Activated naive CD4-positive, alpha-beta T cell treated with anti-CD3 and anti-CD28 coated beads, Interleukin-2, amount 10 ng/mL, durations not matched to agents 7 days and 5 days (primary cell): ENCODE measurements at regions of chr6 and their contacts with region 1.

Region 1: DNA sequence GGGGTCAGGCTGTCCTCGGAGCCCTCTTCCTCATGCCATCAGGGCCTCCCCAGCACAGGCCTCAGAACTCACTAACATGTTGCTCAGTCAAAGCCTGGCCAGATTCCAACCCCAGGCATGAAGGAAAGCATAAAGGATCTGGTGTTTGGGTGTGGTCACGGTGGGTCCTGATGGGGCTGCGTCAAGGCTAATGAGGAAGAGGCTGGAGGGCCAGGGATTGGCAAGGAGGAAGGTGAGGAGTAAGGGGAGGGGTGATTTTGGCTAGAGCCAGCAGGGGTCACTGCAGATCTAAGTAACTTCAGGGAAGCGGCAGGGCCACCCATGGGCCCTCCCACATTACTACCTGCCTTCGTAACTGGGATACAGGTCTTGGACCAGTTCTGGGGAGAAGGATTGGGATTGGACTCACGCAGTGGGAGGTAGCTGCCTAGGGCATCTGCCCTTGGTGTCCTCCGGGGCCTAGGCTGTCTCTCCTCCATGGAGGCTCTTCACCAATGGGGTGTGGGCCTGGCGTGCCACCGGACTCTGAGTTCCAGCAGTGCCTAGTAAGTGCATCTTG is 36.2 kb upstream of the MRPS18A start:
- DNase-seq: peak; percentile 84
- H3K4me3 Mint-ChIP-seq: no peak overlapping the region
- H3K27ac Mint-ChIP-seq: no peak overlapping the region
- H3K4me1 Mint-ChIP-seq: peaks cover 30% of the 10 kb centered on the region
- H3K27me3 Mint-ChIP-seq: peaks cover 26% of the 10 kb centered on the region

Region 2: DNA sequence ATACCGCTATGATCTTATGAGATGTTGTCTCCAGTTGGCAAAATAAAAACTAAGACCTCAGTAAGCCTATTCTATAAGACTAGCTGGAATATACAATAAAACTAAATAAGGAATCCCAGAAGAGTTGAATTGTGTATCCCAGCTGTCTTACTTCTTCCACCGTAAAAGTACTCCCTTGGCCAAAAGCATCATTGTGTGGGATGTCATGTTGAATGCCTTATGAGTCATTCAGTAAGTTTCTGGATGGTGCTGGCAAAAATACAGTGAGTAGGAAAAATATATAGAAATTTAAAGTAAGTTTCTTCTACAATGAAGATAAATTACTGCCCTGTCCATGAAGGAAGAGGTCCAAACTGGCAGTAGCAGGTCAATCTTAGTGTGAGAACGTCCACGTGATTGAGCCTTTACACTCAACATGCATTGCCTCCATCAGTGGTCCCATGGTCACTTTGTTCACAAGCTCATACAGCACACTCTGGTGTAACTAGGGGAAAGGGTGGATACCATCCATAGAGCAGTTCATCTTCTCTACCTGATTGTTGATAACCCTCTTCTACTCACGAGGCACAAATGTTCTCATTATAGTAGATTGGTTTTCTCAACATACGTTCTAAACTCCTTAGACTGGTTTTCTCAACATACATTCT is 340.7 kb before region 1 on chr6:
- CTCF ChIA-PET with region 1: no interaction called
- DNase-seq: no peak
- H3K4me3 Mint-ChIP-seq: peak overlapping the region; percentile 16
- H3K27ac Mint-ChIP-seq: peak overlapping the region; percentile 97
- H3K4me1 Mint-ChIP-seq: peaks cover 58% of the 10 kb centered on the region
- H3K27me3 Mint-ChIP-seq: peaks cover 57% of the 10 kb centered on the region

Region 3: GRCh38 chr6:43758617-43759050 is 34.8 kb after region 1 on chr6:
- CTCF ChIA-PET with region 1: interaction called, 21 read pairs
- DNase-seq: peak; percentile 47
- H3K4me3 Mint-ChIP-seq: no peak overlapping the region
- H3K27ac Mint-ChIP-seq: no peak overlapping the region
- H3K4me1 Mint-ChIP-seq: peaks cover 2% of the 10 kb centered on the region
- H3K27me3 Mint-ChIP-seq: peaks cover 53% of the 10 kb centered on the region